ENCODE measurements at regions of chr1 and their contacts with region 1.

Region 1: DNA sequence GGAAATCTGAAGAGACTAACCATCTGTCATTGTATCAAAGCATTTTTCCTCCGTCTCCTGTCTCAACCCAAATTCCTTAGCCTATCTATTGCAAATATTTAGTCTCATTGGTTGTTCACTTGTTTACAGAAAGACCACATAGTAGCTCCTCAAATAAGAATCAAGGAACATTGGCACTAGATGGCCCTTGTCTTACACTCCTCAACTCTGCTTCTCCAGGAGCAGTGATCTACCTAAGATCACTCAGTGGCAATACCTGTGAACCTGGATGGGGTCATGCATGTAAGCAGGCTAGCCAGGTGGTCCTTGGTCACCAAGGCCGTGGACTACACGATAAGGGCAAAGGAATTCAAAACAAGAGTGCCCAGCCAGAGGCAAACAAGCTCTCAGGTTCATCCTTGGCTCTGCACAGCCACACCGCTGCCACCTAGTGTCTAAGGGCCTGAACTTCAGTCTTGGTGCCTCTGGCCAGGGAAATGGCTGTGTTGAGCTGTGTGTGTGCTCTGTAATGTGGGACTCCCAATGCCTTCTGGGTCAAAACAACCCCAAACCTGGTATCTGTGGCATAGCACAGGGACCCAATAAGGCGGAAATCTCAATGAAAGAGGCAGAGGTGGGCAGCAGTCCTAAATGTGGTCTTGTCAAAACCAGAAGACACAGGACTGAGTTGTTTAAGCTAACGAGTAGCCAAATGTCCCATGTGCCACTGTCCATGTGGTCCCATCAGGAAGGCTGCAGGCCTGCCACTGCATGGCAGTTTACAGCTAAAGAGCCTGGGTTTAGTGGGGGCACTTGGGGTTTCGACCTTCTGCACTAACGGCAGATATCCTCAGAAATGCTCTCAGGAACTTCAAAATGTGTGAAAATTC is 54.5 kb downstream of the GPR161 start:
- DNase-seq: peak; percentile 75
- H3K4me3 Mint-ChIP-seq: no peak overlapping the region
- H3K27ac Mint-ChIP-seq: no peak overlapping the region
- H3K4me1 Mint-ChIP-seq: no peaks in the 10 kb centered on the region
- H3K27me3 Mint-ChIP-seq: no peaks in the 10 kb centered on the region

Region 2: GRCh38 chr1:167599957-167600581 is 482.2 kb before region 1 on chr1:
- CTCF ChIA-PET with region 1: interaction called, 14 read pairs
- POLR2A ChIA-PET with region 1: no interaction called
- DNase-seq: peak; percentile 51
- H3K4me3 Mint-ChIP-seq: peak overlapping the region; percentile 40
- H3K27ac Mint-ChIP-seq: peak overlapping the region; percentile 36
- H3K4me1 Mint-ChIP-seq: peaks cover 42% of the 10 kb centered on the region
- H3K27me3 Mint-ChIP-seq: no peaks in the 10 kb centered on the region

Region 3: DNA sequence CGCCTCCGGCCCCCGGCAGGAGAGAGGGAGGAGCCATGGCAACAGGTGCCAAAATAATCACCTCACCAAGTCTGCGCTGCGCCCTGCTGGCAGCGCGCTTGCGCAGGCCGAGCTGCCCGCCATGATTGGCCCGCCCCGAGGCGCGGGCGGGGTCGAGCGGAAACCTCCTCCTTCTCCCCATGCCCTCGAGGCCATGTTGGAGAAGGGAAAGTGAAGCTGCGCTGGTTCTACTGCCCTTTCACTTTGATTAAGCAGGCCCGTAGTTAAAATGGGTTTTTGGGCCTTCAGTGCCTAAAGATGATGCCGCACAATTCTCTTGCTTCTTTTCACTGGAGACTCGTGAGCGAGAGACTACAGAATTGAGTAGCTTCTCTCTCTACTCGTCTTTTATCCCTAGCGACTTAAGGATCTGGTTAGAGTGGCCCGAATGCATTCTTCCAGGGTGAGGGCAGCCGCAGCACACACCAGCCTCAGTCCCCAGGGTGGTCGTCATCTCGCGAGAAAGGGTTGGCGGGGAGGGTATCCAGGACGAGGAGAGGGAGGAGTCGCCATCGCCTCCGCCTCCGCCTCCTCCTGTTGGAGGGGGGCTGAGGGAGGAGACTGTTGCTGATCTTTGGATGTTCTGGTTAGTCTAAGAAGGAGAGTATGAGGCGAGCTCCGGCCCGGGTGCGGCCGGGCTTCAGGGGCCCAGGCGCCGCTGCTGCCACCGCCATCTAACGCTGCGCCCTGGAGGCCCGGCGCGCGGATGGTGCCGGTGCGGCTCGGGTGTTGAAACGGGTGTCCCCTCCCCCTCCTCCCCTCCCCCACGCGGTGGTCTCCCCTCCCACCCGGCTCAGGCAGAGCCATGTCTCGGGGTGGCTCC is 145.9 kb before region 1 on chr1 and contains the start of gene DCAF6:
- CTCF ChIA-PET with region 1: interaction called, 21 read pairs
- POLR2A ChIA-PET with region 1: interaction called, 17 read pairs
- DNase-seq: peak; percentile 97
- H3K4me3 Mint-ChIP-seq: peak within 1 kb of the TSS; percentile 88
- H3K27ac Mint-ChIP-seq: peak within 1 kb of the TSS; percentile 93
- H3K4me1 Mint-ChIP-seq: peaks cover 34% of the 10 kb centered on the region
- H3K27me3 Mint-ChIP-seq: no peaks in the 10 kb centered on the region
- total RNA-seq, gene DCAF6: 26.4 to 27.1 TPM

Region 4: GRCh38 chr1:168054117-168054516 is 28.1 kb before region 1 on chr1:
- CTCF ChIA-PET with region 1: interaction called, 13 read pairs
- POLR2A ChIA-PET with region 1: no interaction called
- DNase-seq: no peak
- H3K4me3 Mint-ChIP-seq: no peak overlapping the region
- H3K27ac Mint-ChIP-seq: no peak overlapping the region
- H3K4me1 Mint-ChIP-seq: no peaks in the 10 kb centered on the region
- H3K27me3 Mint-ChIP-seq: no peaks in the 10 kb centered on the region

Region 5: DNA sequence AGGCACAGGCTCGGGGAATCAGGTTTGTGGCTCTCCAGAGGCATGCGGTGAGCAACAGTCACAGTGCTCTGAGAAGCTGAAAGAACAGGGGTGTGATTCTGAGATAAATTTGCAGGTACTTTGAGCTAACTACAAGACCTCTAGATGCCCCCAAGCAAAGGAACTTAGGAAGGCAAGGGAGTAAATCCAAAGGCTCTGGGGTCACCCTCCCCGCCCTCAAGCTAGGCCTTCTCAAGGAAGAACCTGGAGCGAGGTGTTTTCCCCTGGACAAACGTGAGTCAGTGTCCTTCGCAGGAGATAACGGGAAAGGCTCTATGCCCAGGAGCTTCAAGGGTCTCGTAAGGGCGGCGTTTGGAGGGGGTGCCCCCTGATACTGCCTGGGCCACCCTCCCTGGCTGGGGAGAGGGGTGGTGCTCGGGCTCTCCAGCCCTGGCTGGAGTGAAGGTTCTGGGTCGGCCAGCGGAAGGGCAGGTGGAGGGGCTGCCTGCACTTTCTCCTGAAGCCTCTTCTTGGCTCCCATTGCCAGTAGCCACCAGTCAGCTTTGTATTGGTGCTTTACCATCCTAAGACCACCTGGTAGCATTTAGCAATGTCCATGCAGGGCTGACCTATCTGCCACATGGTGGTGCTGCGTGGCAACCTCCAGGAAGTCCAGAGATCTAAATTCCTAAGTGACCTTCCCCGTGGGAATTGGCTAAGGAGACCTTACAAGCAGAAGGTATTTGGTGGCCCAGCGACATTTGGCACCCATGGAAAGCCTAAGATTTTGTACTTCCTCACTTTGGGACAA is 10.5 kb after region 1 on chr1:
- CTCF ChIA-PET with region 1: interaction called, 39 read pairs
- POLR2A ChIA-PET with region 1: no interaction called
- DNase-seq: no peak
- H3K4me3 Mint-ChIP-seq: no peak overlapping the region
- H3K27ac Mint-ChIP-seq: no peak overlapping the region
- H3K4me1 Mint-ChIP-seq: no peaks in the 10 kb centered on the region
- H3K27me3 Mint-ChIP-seq: peaks cover 8% of the 10 kb centered on the region

Region 6: GRCh38 chr1:168145184-168146159 is 63.2 kb after region 1 on chr1:
- CTCF ChIA-PET with region 1: interaction called, 11 read pairs
- POLR2A ChIA-PET with region 1: no interaction called
- DNase-seq: peak; percentile 83
- H3K4me3 Mint-ChIP-seq: no peak overlapping the region
- H3K27ac Mint-ChIP-seq: no peak overlapping the region
- H3K4me1 Mint-ChIP-seq: peaks cover 11% of the 10 kb centered on the region
- H3K27me3 Mint-ChIP-seq: peaks cover 5% of the 10 kb centered on the region